ENCODE measurements at regions of chr3 and their contacts with region 1.

Region 1: GRCh38 chr3:58704745-58705144 is 38.2 kb upstream of the FAM3D start:
- DNase-seq: peak in 1 of 2 donors; percentile 67
- H3K4me3 ChIP-seq: no peak overlapping the region
- H3K27ac ChIP-seq: peak overlapping the region; percentile 34 to 83
- H3K4me1 ChIP-seq: no peaks in the 10 kb centered on the region
- H3K27me3 ChIP-seq: no peaks in the 10 kb centered on the region
- CTCF ChIP-seq: no peak
- POLR2A ChIP-seq: no peak

Region 2: DNA sequence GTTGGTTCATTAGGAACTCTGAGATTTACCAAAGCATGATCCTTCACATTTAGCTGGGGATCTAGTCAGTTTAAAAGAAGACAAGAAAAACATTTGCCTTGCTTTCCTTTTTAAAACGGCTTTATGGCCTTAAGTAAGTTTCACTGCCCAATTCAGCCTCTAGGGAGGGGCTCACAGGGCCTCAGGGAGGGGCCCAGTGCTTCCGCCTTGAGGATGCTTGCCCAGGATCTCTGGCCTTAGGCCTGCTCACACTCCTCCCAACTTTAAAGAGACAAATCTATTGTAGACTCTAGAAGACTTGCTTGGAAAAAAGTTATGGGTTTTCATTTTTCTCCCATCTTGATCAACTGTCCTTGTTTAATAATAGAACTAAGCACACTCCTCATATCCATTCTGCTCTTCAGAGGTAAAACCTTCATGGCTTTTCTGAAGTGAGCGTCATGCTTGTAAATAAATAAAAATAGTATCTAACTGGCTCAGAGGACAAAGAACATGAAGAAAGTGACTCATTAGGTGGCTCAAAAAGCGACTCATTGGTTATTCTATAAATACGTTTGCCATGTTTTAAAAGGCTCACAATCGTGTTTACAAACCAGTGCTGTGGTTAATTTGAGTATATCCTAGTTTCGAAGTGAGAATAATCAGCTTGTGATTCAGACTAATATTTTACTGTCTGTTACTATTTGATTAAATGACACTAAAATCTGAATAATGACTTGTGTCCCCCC is 284.8 kb before region 1 on chr3:
- intact Hi-C with region 1: no loop called
- DNase-seq: no peak
- H3K4me3 ChIP-seq: no peak overlapping the region
- H3K27ac ChIP-seq: peak overlapping the region; percentile 1 to 76
- H3K4me1 ChIP-seq: no peaks in the 10 kb centered on the region
- H3K27me3 ChIP-seq: no peaks in the 10 kb centered on the region
- CTCF ChIP-seq: no peak
- POLR2A ChIP-seq: no peak

Region 3: DNA sequence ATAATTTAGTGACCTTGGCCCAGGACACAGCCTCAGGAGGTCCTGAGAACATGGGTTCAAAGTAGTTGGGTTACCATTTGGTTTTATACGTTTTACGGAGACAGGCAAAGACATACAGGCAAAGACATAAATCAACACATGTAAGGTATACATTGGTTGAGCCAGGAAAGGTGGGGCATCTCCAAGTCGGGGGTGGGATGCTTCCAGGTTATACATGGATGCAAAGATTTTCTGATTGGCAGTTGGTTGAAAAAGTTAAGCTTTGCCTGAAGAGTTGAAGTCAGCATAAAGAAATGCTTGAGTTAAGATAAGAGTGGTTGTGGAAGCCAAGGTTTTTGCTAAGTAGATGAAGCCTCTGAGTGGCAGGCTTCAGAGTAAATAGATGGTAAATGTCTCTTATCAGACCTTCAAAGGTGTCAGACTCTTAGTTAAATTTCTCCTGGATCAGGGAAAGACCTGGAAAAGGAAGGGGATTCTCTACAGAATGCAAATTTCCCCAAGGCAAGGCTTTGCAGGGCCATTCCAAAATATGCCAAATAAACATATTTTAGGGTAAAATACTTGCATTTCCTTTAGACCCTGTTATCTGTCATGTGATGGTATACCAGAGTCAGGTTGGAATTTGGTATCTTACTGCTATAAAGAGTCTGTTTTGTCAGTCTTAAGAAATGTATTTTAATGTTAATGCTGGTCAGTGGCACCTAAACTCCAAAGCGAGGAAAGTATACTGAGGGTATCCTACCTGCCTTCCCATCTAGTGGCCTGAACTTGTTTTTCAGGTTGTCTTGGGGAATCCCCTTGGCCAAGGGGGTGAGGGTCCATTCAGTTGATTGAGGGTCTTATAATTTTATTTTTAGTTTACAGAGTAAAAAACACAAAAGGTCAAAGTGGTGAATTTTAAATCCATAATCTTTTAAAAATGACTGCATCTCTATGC is 263.0 kb before region 1 on chr3:
- intact Hi-C with region 1: loop called (anchors 5 kb)
- DNase-seq: no peak
- H3K4me3 ChIP-seq: no peak overlapping the region
- H3K27ac ChIP-seq: no peak overlapping the region
- H3K4me1 ChIP-seq: no peaks in the 10 kb centered on the region
- H3K27me3 ChIP-seq: no peaks in the 10 kb centered on the region
- CTCF ChIP-seq: no peak
- POLR2A ChIP-seq: no peak

Region 4: GRCh38 chr3:58722561-58722960 is 17.8 kb after region 1 on chr3:
- intact Hi-C with region 1: no loop called
- DNase-seq: no peak
- H3K4me3 ChIP-seq: no peak overlapping the region
- H3K27ac ChIP-seq: no peak overlapping the region
- H3K4me1 ChIP-seq: no peaks in the 10 kb centered on the region
- H3K27me3 ChIP-seq: no peaks in the 10 kb centered on the region
- CTCF ChIP-seq: no peak
- POLR2A ChIP-seq: no peak

Region 5: DNA sequence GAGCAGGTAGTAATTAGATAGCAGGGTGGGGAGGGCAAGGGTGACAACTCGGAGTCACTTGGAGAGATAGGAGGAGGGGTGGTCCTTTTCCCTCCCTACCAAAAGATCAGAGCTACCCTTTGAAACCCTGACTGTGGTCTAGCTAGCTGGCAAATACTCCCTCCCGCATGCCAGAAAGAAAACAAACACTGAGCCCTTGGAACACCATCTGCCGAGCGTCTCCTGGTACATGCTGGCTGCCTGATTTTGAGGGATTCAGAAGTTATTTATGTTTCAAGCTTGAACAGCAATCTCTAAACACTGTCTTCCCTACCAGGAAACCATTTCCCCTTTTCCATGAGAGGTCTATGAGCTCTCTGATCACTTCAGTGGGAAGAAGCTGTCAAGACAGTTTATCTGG is 636.7 kb after region 1 on chr3:
- intact Hi-C with region 1: no loop called
- DNase-seq: no peak
- H3K4me3 ChIP-seq: no peak overlapping the region
- H3K27ac ChIP-seq: no peak overlapping the region
- H3K4me1 ChIP-seq: no peaks in the 10 kb centered on the region
- H3K27me3 ChIP-seq: no peaks in the 10 kb centered on the region
- CTCF ChIP-seq: no peak
- POLR2A ChIP-seq: no peak